ENCODE measurements at regions of chr12 and their contacts with region 1.

Region 1: GRCh38 chr12:19614601-19615383 is 175.5 kb downstream of the AEBP2 start:
- DNase-seq: no peak
- ATAC-seq: no peak
- H3K4me3 ChIP-seq: no peak overlapping the region
- H3K27ac ChIP-seq: no peak overlapping the region
- H3K4me1 ChIP-seq: no peaks in the 10 kb centered on the region
- H3K27me3 ChIP-seq: no peaks in the 10 kb centered on the region
- CTCF ChIP-seq: no peak

Region 2: DNA sequence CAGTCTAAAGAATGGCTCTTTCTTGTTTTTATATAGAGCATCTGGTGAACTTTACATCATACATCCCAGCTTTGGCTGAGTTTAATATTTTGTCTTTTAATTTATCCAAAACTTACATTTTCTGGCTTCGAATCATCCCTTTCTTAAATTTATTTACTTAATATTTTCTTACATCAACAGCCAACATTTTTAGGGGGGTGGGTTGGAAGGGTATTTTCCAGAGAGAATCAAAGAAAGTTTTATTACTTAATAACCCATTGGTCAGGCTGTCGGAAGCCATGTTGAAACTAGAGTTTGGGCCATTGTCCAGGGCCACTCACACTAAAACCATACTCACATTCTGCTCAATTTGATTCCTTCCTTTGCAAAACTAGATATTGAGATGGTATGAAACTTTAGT is 44.7 kb after region 1 on chr12:
- intact Hi-C with region 1: loop called in 1 of 10 experiments (anchors 2 kb)
- DNase-seq: no peak
- ATAC-seq: no peak
- H3K4me3 ChIP-seq: no peak overlapping the region
- H3K27ac ChIP-seq: no peak overlapping the region
- H3K4me1 ChIP-seq: peaks cover 0 to 10% (median 5%) of the 10 kb centered on the region in 9 donors
- H3K27me3 ChIP-seq: no peaks in the 10 kb centered on the region
- CTCF ChIP-seq: no peak